Esophagus muscularis mucosa (tissue), 4 donors: ENCODE measurements at regions of chr14 and their contacts with region 1.

Region 1: GRCh38 chr14:100654814-100655740 is 67.9 kb upstream of the BEGAIN start:
- DNase-seq: no peak
- H3K4me3 ChIP-seq: peak overlapping the region in 2 of 4 donors; percentile 23 to 32
- H3K27ac ChIP-seq: no peak overlapping the region
- H3K4me1 ChIP-seq: peaks cover 0 to 8% (median 6%) of the 10 kb centered on the region in 4 donors
- H3K27me3 ChIP-seq: peaks cover 0 to 40% (median 12%) of the 10 kb centered on the region in 4 donors
- CTCF ChIP-seq: peak; percentile 38 to 67 (median 43)
- EP300 ChIP-seq: no peak
- POLR2A ChIP-seq: no peak

Region 2: GRCh38 chr14:100524933-100525243 is 130.2 kb before region 1 on chr14:
- intact Hi-C with region 1: loop called (anchors 5 kb)
- DNase-seq: peak; percentile 88
- H3K4me3 ChIP-seq: no peak overlapping the region
- H3K27ac ChIP-seq: no peak overlapping the region
- H3K4me1 ChIP-seq: no peaks in the 10 kb centered on the region
- H3K27me3 ChIP-seq: no peaks in the 10 kb centered on the region
- CTCF ChIP-seq: peak; percentile 48 to 56 (median 51)
- EP300 ChIP-seq: no peak
- POLR2A ChIP-seq: no peak

Region 3: GRCh38 chr14:100603341-100604120 is 51.5 kb before region 1 on chr14:
- intact Hi-C with region 1: no loop called
- DNase-seq: no peak
- H3K4me3 ChIP-seq: no peak overlapping the region
- H3K27ac ChIP-seq: no peak overlapping the region
- H3K4me1 ChIP-seq: no peaks in the 10 kb centered on the region
- H3K27me3 ChIP-seq: peaks cover 0 to 43% (median 0%) of the 10 kb centered on the region in 4 donors
- CTCF ChIP-seq: no peak
- EP300 ChIP-seq: no peak
- POLR2A ChIP-seq: no peak

Region 4: GRCh38 chr14:100747021-100747586 is 92.0 kb after region 1 on chr14:
- intact Hi-C with region 1: no loop called
- DNase-seq: no peak
- H3K4me3 ChIP-seq: no peak overlapping the region
- H3K27ac ChIP-seq: no peak overlapping the region
- H3K4me1 ChIP-seq: no peaks in the 10 kb centered on the region
- H3K27me3 ChIP-seq: no peaks in the 10 kb centered on the region
- CTCF ChIP-seq: no peak
- EP300 ChIP-seq: no peak
- POLR2A ChIP-seq: no peak

Region 5: DNA sequence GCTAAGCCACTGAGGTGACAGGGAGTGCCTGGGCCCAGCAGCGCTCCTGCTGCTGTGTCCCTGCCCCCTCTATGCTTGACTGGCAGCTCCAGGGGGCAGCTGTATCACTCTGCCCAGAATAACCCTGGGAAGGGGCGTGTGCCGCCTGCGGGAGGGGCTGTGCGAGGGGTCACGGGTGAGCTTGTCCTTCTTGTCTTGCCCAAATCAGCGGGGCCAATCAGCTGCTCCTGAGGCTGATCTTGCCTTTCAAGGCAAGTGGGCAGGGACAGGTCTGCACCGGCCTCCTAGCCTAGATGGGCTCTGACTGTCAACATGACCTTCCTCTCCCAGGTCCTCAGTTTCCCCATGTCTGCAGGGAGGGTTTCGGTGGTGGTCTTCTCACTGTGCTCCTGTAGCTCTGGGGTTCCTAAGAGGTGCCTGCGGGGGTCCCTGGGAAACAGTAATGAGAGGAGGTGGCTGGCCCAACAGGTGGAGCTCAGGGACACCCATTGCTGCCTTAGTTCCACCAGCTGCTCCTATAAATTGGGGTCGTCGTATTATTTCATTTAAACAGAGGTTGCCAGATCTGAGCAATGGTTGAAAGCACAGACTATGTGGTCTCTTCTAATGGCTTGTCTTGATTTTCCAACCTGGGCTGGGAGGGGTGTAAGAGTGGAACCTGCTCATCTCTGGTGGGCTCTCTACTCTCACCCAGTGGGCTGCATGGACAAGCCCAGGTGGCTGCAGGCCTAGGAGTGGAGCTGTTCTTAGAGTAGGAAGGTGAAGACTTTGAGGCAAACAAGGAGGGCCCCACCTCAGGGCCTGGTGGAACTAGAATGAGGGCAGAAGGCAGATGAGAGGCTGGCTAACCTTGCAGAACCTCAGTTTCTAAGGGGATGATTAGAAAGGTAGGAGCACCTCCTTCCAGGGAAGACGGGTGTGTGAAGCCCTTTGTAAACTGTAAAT is 236.7 kb after region 1 on chr14:
- intact Hi-C with region 1: no loop called
- DNase-seq: no peak
- H3K4me3 ChIP-seq: no peak overlapping the region
- H3K27ac ChIP-seq: no peak overlapping the region
- H3K4me1 ChIP-seq: peaks cover 0 to 4% (median 2%) of the 10 kb centered on the region in 4 donors
- H3K27me3 ChIP-seq: peaks cover 0 to 45% (median 0%) of the 10 kb centered on the region in 4 donors
- CTCF ChIP-seq: no peak
- EP300 ChIP-seq: no peak
- POLR2A ChIP-seq: no peak